ENCODE measurements at regions of chr5 and their contacts with region 1.

Region 1: DNA sequence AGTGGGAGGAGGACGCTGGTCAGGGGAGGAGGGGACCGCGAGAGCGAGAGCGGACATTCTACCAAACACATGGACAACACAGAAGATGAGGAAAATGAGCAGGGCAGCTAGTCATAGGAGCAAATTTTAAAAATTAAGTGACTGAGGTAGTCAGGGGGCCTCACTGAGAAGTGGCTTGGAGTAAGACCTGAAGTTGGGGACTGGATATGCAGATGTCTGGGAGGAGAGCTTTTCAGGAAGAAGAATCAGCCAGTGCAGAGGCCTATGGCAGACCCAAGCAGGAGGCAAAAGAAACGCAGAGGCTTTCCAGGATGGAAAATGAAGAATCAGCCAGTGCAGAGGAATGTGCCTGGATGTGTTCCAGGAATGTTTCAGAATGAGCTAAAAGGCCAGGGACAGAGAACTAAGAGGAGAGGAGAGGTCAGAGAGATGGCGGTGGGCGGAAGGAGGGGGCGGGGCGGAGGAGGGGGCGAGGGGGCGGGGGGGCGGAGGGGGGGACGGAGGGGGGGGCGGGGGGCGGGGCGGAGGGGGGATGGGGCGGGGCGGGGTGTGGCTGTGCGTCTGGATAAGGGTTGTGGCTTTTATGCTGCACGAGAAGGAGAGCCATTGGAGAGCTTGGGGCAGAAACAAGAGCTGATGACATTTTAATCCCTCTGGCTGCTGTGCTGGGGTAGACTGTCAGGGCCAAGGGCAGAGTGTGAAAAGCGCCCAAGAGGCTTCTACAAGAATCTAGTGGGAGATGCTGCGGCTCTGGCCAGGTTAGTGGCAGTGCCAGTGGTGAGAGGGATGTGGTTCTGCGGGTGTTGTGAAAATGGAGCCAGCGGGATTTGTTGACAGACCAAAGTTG is 129.6 kb downstream of the KCNIP1 start:
- DNase-seq: peak; percentile 28
- ATAC-seq: peak; percentile 34
- H3K4me3 Mint-ChIP-seq: peak overlapping the region; percentile 82
- H3K27ac Mint-ChIP-seq: peak overlapping the region; percentile 98
- H3K4me1 Mint-ChIP-seq: peaks cover 39% of the 10 kb centered on the region
- H3K27me3 Mint-ChIP-seq: no peaks in the 10 kb centered on the region; the same call in 1 of the 2 replicates
- CTCF ChIP-seq: peak; percentile 2; the same call in 1 of the 2 replicates

Region 2: GRCh38 chr5:170388818-170389549 is 244.5 kb before region 1 on chr5 and contains the start of gene KCNMB1:
- CTCF ChIA-PET with region 1: no interaction called
- POLR2A ChIA-PET with region 1: no interaction called
- DNase-seq: no peak
- ATAC-seq: peak; percentile 58
- H3K4me3 Mint-ChIP-seq: no peak within 1 kb of the TSS
- H3K27ac Mint-ChIP-seq: no peak within 1 kb of the TSS
- H3K4me1 Mint-ChIP-seq: peaks cover 60% of the 10 kb centered on the region
- H3K27me3 Mint-ChIP-seq: no peaks in the 10 kb centered on the region; the same call in none of the 2 replicates
- CTCF ChIP-seq: no peak
- total RNA-seq, gene KCNMB1: 0.16 to 0.24 TPM (median 0.21 TPM) in 3 replicates

Region 3: GRCh38 chr5:170420780-170421412 is 212.6 kb before region 1 on chr5:
- CTCF ChIA-PET with region 1: interaction called, 20 read pairs
- POLR2A ChIA-PET with region 1: no interaction called
- DNase-seq: peak; percentile 73
- ATAC-seq: peak; percentile 94
- H3K4me3 Mint-ChIP-seq: no peak overlapping the region
- H3K27ac Mint-ChIP-seq: no peak overlapping the region
- H3K4me1 Mint-ChIP-seq: peaks cover 21% of the 10 kb centered on the region
- H3K27me3 Mint-ChIP-seq: no peaks in the 10 kb centered on the region
- CTCF ChIP-seq: peak; percentile 63

Region 4: DNA sequence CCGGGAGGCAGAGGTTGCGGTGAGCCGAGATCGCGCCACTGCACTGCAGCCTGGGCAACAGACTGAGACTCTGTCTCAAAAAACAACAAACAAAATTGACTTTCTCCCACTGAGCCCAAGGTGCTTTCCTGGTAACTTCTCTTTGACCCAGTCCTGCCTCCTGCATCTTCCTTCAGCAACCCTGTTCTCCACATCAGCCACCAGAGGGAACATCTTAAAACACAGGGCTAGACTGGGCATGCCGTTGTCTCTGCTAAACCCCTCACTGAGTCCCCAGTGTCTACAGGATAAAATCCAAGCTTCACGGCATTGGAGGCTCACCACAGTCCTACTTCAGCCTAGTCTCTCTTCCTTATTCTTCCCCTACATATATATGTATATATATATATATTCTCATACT is 204.4 kb before region 1 on chr5:
- CTCF ChIA-PET with region 1: interaction called, 47 read pairs
- POLR2A ChIA-PET with region 1: no interaction called
- DNase-seq: no peak
- ATAC-seq: peak; percentile 84
- H3K4me3 Mint-ChIP-seq: no peak overlapping the region
- H3K27ac Mint-ChIP-seq: no peak overlapping the region
- H3K4me1 Mint-ChIP-seq: peaks cover 18% of the 10 kb centered on the region
- H3K27me3 Mint-ChIP-seq: no peaks in the 10 kb centered on the region; the same call in 1 of the 2 replicates
- CTCF ChIP-seq: no peak

Region 5: GRCh38 chr5:170434966-170435605 is 198.4 kb before region 1 on chr5:
- CTCF ChIA-PET with region 1: interaction called, 47 read pairs
- POLR2A ChIA-PET with region 1: no interaction called
- DNase-seq: peak; percentile 78
- ATAC-seq: peak; percentile 91
- H3K4me3 Mint-ChIP-seq: no peak overlapping the region
- H3K27ac Mint-ChIP-seq: no peak overlapping the region
- H3K4me1 Mint-ChIP-seq: peaks cover 30% of the 10 kb centered on the region
- H3K27me3 Mint-ChIP-seq: no peaks in the 10 kb centered on the region; the same call in 1 of the 2 replicates
- CTCF ChIP-seq: peak; percentile 95

Region 6: GRCh38 chr5:170603578-170604565 is 29.6 kb before region 1 on chr5:
- CTCF ChIA-PET with region 1: interaction called, 36 read pairs
- POLR2A ChIA-PET with region 1: no interaction called
- DNase-seq: peak; percentile 90
- ATAC-seq: peak; percentile 95
- H3K4me3 Mint-ChIP-seq: no peak overlapping the region
- H3K27ac Mint-ChIP-seq: no peak overlapping the region
- H3K4me1 Mint-ChIP-seq: peaks cover 3% of the 10 kb centered on the region; the same call in 1 of the 2 replicates
- H3K27me3 Mint-ChIP-seq: peaks cover 17% of the 10 kb centered on the region
- CTCF ChIP-seq: peak; percentile 80

Region 7: DNA sequence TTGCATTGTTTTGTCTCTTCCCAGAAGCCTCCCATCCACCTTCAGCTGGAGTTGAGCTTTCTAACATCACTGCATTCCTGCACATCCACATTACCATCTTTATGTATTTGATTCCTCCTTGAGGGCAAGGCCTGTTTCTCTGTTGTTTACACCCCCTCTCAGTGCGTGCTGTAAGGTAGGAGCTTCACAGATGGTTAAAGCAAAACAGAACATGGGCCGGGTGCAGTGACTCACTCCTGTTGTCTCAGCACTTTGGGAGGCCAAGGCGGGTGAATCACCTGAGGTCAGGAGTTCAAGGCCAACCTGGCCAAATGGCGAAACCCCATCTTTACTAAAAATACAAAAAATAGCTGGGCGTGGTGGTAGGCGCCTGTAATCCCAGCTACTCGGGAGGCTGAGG is 18.7 kb before region 1 on chr5:
- CTCF ChIA-PET with region 1: interaction called, 44 read pairs
- POLR2A ChIA-PET with region 1: no interaction called
- DNase-seq: no peak
- ATAC-seq: no peak
- H3K4me3 Mint-ChIP-seq: no peak overlapping the region
- H3K27ac Mint-ChIP-seq: no peak overlapping the region
- H3K4me1 Mint-ChIP-seq: peaks cover 53% of the 10 kb centered on the region
- H3K27me3 Mint-ChIP-seq: peaks cover 51% of the 10 kb centered on the region
- CTCF ChIP-seq: no peak

Region 8: GRCh38 chr5:170791325-170791954 is 158.0 kb after region 1 on chr5:
- CTCF ChIA-PET with region 1: interaction called, 55 read pairs
- POLR2A ChIA-PET with region 1: no interaction called
- DNase-seq: peak; percentile 84
- ATAC-seq: peak; percentile 90
- H3K4me3 Mint-ChIP-seq: no peak overlapping the region
- H3K27ac Mint-ChIP-seq: no peak overlapping the region; the same call in 1 of the 2 replicates
- H3K4me1 Mint-ChIP-seq: peaks cover 36% of the 10 kb centered on the region
- H3K27me3 Mint-ChIP-seq: peaks cover 6% of the 10 kb centered on the region; the same call in 1 of the 2 replicates
- CTCF ChIP-seq: peak; percentile 32